Activated CD4-positive, alpha-beta T cell treated with anti-CD3 and anti-CD28 coated beads, Interleukin-2, amount 10 ng/mL, durations not matched to agents 24 days and 14 days (primary cell): ENCODE measurements at regions of chr4 and their contacts with region 1.

Region 1: DNA sequence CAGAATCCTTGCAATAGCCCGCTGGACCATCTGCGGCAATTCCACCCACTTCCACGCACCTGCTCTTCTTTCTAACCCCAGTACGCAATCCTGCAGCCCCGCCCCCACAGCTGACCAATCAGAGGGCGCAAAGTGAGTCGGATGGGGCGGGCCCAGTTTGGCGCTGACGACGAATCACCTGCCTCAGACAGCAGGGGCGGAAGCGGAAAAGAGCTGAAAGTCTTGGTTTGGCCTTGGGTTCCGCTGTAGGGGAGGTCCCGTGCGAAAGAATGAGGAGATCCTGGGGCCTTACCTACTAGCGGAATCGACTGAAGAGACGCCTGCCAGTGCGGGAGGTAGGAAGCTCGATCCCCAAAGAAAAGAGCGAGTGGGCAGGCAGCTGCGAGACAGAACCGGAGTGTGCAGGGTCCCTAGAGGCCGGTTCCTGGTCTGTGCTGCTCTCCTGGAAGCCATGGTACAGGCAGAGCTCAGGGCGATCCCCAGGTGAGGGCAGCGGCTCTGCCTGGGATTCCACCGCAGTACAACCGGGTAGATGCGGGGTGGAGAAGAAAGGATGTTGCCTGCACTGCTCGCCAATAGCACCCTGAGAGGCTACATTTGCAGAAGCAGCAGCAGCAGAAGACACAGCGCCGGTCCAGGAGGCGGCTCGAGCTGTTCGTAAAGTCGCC is at the start of gene TMEM184C:
- DNase-seq: peak; percentile 100
- H3K4me3 Mint-ChIP-seq: peak within 1 kb of the TSS; percentile 99
- H3K27ac Mint-ChIP-seq: peak within 1 kb of the TSS; percentile 94
- H3K4me1 Mint-ChIP-seq: peaks cover 21% of the 10 kb centered on the region
- H3K27me3 Mint-ChIP-seq: peaks cover 17% of the 10 kb centered on the region
- total RNA-seq, gene TMEM184C: 18.3 and 19.7 TPM in 2 replicates

Region 2: DNA sequence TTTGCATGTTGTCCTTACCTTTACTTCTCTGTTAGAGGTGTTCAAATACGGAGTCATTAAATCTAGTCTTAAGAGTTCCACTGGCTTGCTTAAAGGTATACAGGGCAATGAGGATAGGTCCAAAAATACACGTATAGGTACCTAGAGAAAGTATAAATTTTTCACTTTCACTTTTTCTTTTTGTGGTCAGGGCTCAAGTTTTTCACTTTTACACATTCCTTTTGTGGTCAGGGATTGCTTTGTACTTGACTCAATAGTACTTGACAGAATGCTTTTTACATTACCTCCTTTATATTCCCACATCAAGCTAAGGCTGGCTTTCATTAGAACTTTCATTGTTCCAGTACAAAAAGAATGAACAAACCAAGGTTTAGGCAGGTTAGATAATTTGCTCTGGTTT is 21.6 kb after region 1 on chr4:
- intact Hi-C with region 1: loop called (anchors 2 kb)
- DNase-seq: no peak
- H3K4me3 Mint-ChIP-seq: no peak overlapping the region
- H3K27ac Mint-ChIP-seq: no peak overlapping the region
- H3K4me1 Mint-ChIP-seq: peaks cover 7% of the 10 kb centered on the region
- H3K27me3 Mint-ChIP-seq: no peaks in the 10 kb centered on the region

Region 3: GRCh38 chr4:147651563-147651962 is 34.3 kb after region 1 on chr4:
- intact Hi-C with region 1: no loop called
- DNase-seq: no peak
- H3K4me3 Mint-ChIP-seq: no peak overlapping the region
- H3K27ac Mint-ChIP-seq: no peak overlapping the region
- H3K4me1 Mint-ChIP-seq: peaks cover 13% of the 10 kb centered on the region
- H3K27me3 Mint-ChIP-seq: no peaks in the 10 kb centered on the region

Region 4: DNA sequence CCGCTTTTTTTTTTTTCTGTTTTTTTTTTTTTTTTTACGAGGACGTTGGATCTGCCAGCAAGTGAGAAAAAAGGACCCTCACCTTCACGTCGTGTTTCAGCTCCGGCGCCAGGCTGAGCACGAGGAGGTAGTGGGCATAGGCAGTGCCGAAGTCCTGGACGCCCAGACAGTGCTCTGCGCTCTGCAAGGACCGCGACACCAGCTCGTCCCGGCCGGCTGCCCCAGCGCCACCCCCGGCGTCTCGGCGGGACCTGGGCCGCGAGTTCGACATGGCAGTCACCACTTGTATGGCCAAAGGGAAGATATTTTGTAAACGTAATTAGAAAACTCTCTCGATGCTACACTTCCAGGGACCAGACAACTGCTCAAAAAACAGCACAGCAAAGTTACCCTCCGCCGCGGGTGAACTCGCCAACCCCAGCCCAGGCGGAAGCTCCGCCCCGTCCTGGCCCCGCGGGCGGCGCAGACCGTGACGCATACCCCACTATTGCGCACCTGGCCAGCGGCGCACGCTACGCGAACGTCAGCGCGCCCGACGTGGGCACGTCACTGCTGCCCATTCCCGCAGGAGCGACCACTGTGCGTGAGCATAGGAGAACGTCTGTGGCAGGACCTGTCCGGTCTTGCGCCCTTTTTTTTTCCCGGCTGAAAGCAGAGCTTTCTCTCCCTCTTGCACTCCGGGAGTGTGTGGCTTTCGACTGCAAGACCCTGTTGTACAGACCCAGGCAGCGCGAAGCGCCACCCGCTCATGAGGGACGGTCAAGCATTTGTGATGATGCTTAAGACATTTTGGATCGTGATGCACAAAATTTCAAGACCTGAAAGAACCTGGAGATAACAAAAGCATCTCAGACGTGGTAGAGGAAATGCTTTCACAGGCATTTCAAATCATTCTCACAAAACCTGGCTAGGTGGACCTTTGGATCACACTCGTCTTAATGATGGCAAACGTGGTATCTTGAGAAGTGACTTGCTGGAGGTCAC is 66.7 kb after region 1 on chr4 and contains the start of gene PRMT9:
- intact Hi-C with region 1: loop called (anchors 1 kb)
- DNase-seq: peak; percentile 97
- H3K4me3 Mint-ChIP-seq: peak within 1 kb of the TSS; percentile 99
- H3K27ac Mint-ChIP-seq: peak within 1 kb of the TSS; percentile 97
- H3K4me1 Mint-ChIP-seq: peaks cover 28% of the 10 kb centered on the region
- H3K27me3 Mint-ChIP-seq: peaks cover 8% of the 10 kb centered on the region
- total RNA-seq, gene PRMT9: 8.1 TPM in 2 replicates

Region 5: DNA sequence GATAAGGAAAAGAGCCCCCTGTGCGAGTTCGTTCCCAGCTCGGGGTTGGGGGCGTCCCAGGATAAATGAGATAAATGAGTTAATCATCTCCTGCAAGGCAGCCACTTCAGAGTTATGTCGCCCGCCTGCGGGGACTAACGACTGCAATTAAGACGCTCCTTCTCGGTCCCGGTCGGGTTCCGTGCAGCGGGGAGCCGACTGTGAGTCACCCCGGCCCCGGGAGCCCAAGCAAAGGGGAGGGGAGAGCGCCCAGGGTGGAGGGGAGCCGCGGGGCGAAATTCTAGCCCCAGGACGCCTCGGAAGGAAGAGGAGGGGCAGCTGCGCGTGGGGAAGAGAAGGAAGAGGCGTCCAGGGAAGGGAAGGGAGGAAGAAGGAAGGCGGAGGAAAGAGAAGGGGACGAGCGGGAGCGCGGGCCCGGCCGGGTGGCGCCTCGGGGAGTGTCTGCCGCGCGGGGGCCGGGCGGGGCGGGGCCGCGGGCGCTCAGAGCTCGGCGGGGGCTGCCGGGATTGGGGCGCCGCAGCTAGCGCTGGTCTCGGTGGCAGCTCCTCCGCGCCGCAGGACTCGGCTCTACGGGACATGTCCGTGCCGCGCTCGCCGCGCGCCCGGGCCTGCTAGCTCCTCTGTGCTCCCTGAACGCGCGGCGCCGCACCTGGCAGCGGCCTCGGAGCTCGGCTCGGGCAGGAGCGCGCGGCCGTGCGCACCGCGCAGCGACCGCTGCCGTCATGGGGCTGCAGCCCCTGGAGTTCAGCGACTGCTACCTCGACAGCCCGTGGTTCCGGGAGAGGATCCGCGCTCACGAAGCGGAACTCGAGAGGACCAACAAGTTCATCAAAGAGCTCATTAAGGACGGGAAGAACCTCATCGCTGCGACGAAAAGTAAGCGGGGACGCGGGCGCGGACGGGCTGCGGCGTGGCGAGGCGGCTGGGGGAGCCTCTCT is 114.5 kb after region 1 on chr4 and contains the start of gene ARHGAP10:
- intact Hi-C with region 1: loop called (anchors 2 kb)
- DNase-seq: peak; percentile 88
- H3K4me3 Mint-ChIP-seq: peak within 1 kb of the TSS; percentile 94
- H3K27ac Mint-ChIP-seq: peak within 1 kb of the TSS; percentile 90
- H3K4me1 Mint-ChIP-seq: peaks cover 34% of the 10 kb centered on the region
- H3K27me3 Mint-ChIP-seq: peaks cover 36% of the 10 kb centered on the region
- total RNA-seq, gene ARHGAP10: 7.4 and 8.3 TPM in 2 replicates

Region 6: DNA sequence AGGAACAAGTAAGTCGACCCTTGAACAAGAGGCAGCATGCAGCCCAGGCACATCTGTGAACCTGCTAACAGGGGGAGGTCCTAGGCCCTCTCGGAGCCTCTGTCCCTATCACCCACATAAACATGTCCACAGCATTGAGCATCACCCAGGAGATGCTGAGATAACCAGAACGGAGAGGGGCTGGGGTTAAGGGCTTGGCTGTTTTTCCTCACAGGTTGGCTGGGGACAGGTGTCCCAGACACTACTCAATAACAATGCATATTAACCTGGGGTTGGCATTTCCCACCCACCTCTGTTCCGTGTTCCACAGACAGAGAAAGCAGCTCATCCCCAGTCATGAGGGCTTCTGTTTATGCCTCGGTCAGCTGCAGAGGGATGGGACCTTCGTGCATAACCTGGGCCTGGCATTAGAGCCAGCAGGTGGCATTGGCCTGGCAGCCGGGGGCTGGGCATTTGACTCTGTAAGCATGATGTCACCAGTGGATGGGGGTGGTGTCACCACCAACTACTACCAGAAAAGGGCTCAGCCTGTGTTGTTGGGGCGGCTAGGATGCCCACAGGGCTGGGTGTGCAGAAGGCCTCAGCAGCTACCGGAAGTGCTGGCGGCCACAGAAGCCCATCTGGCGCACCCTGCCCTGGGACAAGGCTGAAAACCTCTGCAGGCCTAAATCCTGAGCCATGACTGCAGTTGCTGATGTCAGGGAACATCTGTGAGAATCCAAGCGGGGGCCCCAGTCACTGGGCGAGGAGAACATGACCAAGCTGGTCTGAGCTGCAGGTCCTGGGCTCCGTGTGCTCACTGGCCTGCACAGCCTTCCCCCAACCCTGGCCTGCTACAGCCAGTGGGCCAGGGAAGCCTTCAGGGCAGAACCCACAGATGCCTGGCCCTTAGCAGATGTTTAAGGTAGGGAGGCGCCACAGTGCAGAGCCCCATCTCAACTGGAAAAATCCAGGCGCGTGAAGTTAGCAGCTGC is 473.5 kb after region 1 on chr4:
- intact Hi-C with region 1: no loop called
- DNase-seq: no peak
- H3K4me3 Mint-ChIP-seq: no peak overlapping the region
- H3K27ac Mint-ChIP-seq: no peak overlapping the region
- H3K4me1 Mint-ChIP-seq: no peaks in the 10 kb centered on the region
- H3K27me3 Mint-ChIP-seq: no peaks in the 10 kb centered on the region